Activated T-helper 2 cell treated with anti-CD3 and anti-CD28 coated beads, Interferon-gamma antibody, Interleukin-2, Interleukin-4, amounts not matched to agents 10 μg/mL and 5 μg/mL and 100 μg/mL, durations not matched to agents 14 hours and 24 hours and 36 hours (primary cell): ENCODE measurements at regions of chr5 and their contacts with region 1.

Region 1: GRCh38 chr5:151157426-151158286 is at the start of gene ANXA6:
- DNase-seq: peak; percentile 61
- H3K4me3 Mint-ChIP-seq: peak within 1 kb of the TSS; percentile 96
- H3K27ac Mint-ChIP-seq: peak within 1 kb of the TSS; percentile 90
- H3K4me1 Mint-ChIP-seq: peaks cover 46% of the 10 kb centered on the region
- H3K27me3 Mint-ChIP-seq: no peaks in the 10 kb centered on the region
- total RNA-seq, gene ANXA6: 560 and 569 TPM in 2 replicates

Region 2: GRCh38 chr5:150449517-150450339 is 707.9 kb before region 1 on chr5 and contains the start of gene RPS14:
- intact Hi-C with region 1: loop called (anchors 10 kb)
- DNase-seq: peak; percentile 91
- H3K4me3 Mint-ChIP-seq: peak within 1 kb of the TSS; percentile 99
- H3K27ac Mint-ChIP-seq: peak within 1 kb of the TSS; percentile 100
- H3K4me1 Mint-ChIP-seq: peaks cover 23% of the 10 kb centered on the region
- H3K27me3 Mint-ChIP-seq: no peaks in the 10 kb centered on the region
- total RNA-seq, gene RPS14: 2,552 and 2,593 TPM in 2 replicates

Region 3: DNA sequence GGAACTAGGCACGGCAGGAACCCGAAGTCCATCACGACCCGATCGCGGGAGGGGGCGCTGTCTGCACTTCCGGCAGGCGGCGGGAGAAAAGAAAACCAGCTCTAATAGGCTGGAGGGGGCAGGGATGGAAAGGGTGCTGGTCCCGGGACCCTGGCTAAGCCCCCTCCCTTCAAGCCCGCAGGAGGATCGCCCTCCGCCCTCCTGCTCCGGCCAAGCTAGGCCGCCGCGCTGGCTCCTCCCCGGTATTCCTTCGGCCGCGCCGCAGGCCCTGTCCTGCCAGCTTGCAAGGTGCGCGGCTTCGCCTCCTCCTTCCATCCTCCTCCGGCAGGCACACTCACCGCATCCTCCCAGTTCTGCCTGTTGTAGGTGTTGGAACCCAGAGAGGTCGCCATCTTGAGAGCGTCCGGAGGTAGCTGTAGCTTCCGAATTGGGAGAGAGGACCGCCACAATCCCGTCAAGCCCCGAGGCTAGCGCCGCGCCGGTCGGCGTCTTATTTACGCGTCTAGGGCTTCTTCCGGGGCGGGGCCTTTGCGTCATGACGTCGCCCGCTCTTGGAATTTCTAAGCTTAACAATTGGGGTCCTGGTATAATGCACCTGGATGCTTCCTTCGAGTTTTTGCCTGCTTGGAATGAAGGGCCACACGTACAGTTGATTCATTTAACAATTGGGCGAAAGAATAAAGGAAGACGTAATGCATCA is 456.9 kb before region 1 on chr5 and contains the start of gene RBM22:
- intact Hi-C with region 1: loop called (anchors 5 kb)
- DNase-seq: peak; percentile 86
- H3K4me3 Mint-ChIP-seq: no peak within 1 kb of the TSS
- H3K27ac Mint-ChIP-seq: no peak within 1 kb of the TSS
- H3K4me1 Mint-ChIP-seq: peaks cover 6% of the 10 kb centered on the region
- H3K27me3 Mint-ChIP-seq: no peaks in the 10 kb centered on the region
- total RNA-seq, gene RBM22: 65.2 and 71.7 TPM in 2 replicates

Region 4: GRCh38 chr5:151080623-151081430 is 76.8 kb before region 1 on chr5 and contains the start of gene TNIP1:
- intact Hi-C with region 1: loop called (anchors 1 kb)
- DNase-seq: peak; percentile 93
- H3K4me3 Mint-ChIP-seq: peak within 1 kb of the TSS; percentile 99
- H3K27ac Mint-ChIP-seq: peak within 1 kb of the TSS; percentile 87
- H3K4me1 Mint-ChIP-seq: peaks cover 76% of the 10 kb centered on the region
- H3K27me3 Mint-ChIP-seq: no peaks in the 10 kb centered on the region
- total RNA-seq, gene TNIP1: 473 and 477 TPM in 2 replicates

Region 5: DNA sequence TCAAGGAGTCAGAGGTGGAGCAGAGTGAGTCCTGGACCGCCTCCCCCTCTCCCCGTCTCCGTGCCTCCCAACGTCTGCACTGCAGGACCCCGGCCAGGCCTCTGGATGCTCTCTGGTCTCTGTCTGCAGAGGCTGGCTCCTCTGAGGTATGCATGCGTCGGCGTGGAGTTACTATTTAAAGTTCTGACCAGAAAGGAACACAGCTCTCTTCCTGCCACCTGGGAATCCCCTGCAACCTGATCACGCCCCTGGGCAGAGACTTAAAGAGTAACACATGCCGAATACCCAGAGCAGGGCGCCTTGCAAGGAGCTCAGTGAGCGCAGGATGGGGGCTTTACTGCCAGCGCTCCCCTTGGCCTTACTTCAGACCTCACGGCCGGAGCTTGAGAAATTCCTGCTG is 16.1 kb before region 1 on chr5:
- intact Hi-C with region 1: loop called (anchors 1 kb)
- DNase-seq: no peak
- H3K4me3 Mint-ChIP-seq: peak overlapping the region; percentile 66
- H3K27ac Mint-ChIP-seq: peak overlapping the region; percentile 68
- H3K4me1 Mint-ChIP-seq: peaks cover 78% of the 10 kb centered on the region
- H3K27me3 Mint-ChIP-seq: no peaks in the 10 kb centered on the region

Region 6: DNA sequence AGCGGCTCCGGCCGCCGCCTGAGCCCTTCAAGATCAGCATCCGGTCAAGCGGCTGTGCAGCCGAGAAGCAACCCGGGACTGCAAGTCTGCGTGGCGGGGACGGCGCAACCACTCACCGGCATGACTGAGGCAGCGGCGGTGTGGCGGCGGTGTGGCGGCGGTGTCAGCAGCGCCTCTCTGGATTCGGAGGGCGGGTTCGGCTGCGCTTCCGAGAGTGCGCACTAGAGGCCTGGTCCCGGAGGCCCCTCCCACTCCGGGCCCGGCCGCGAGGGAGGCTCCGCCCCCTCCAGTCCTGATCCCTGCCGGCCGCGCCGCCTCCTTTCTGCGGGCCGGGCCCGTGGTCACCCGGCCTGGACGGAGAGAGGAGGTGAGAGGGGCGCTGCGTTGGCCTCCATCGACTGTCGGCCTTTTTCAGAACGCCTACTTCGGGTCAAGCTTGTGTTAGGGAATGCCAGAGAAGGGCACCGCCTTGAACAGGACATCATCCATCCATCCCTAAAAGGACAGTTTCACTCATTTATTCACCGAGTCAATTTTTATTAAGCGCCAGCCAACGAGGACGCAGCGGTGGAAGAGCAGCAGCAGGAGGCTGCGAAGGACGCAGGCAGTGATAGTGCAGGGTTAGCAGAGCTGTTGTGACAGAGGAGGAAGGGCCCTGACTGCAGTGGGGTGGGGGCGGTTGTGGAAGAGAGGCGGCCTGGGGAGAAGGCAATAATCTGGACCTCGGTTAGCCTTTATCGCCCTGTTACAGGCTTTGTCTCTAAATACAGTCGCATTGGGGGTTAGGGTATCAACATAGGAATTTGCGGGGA is 601.0 kb after region 1 on chr5 and contains the start of gene ATOX1:
- intact Hi-C with region 1: loop called (anchors 10 kb)
- DNase-seq: peak; percentile 87
- H3K4me3 Mint-ChIP-seq: peak within 1 kb of the TSS; percentile 92
- H3K27ac Mint-ChIP-seq: peak within 1 kb of the TSS; percentile 85
- H3K4me1 Mint-ChIP-seq: peaks cover 32% of the 10 kb centered on the region
- H3K27me3 Mint-ChIP-seq: peaks cover 4% of the 10 kb centered on the region
- total RNA-seq, gene ATOX1: 69.8 and 82.8 TPM in 2 replicates